CD4-positive, alpha-beta memory T cell (primary cell): ENCODE measurements at regions of chr10 and their contacts with region 1.

Region 1: DNA sequence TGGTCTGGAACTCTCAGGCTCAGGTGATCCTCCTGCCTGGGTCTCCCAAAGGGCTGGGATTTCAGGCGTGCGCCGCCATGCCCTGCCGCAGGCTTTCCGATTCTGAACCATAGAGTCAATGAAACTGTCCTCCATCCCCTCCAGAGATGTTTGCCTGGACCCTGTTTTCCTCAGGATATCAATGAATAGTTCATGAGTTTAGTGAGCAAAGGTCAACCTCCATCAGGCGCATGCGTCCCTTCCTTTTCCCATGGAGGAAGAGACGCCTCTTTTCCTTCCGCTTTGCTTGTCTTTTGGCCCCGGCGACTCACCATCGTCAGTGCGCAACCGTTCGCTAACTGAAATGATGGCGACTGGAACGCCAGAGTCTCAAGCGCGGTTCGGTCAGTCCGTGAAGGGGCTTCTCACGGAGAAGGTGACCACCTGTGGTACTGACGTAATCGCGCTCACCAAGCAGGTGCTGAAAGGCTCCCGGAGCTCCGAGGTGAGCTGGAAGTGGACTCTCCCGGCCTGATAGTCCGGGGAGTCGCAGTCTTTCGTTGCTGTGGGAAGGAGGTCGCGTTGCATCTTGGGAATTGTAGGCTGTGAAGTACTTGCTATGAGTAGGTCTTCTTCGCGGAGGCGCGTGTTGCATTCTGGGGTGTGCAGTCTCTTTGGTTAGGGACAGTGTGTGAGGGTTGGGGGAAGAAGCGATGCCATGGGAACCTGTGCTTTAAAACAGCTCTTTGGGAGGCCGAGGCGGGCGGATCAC is at the start of gene BORCS7:
- DNase-seq: peak; percentile 87 to 93 (median 89)
- H3K4me3 ChIP-seq: peak within 1 kb of the TSS; percentile 63 to 91
- H3K4me3 Mint-ChIP-seq: peak within 1 kb of the TSS; percentile 77 to 99 (median 94)
- H3K27ac ChIP-seq: peak within 1 kb of the TSS; percentile 89
- H3K27ac Mint-ChIP-seq: peak within 1 kb of the TSS; percentile 92 to 100 (median 99)
- H3K4me1 ChIP-seq: peaks cover 4% of the 10 kb centered on the region
- H3K4me1 Mint-ChIP-seq: peaks cover 8 to 24% (median 14%) of the 10 kb centered on the region in 4 donors
- H3K27me3 ChIP-seq: no peaks in the 10 kb centered on the region
- H3K27me3 Mint-ChIP-seq: no peaks in the 10 kb centered on the region
- total RNA-seq, gene BORCS7: 14.7 to 17.7 TPM

Region 2: GRCh38 chr10:102704915-102705314 is 149.2 kb before region 1 on chr10:
- CTCF ChIA-PET with region 1: no interaction called
- POLR2A ChIA-PET with region 1: no interaction called
- intact Hi-C with region 1: no loop called
- DNase-seq: no peak
- H3K4me3 ChIP-seq: no peak overlapping the region
- H3K4me3 Mint-ChIP-seq: no peak overlapping the region
- H3K27ac ChIP-seq: no peak overlapping the region
- H3K27ac Mint-ChIP-seq: peak overlapping the region in 1 of 7 donors; percentile 25
- H3K4me1 ChIP-seq: no peaks in the 10 kb centered on the region
- H3K4me1 Mint-ChIP-seq: peaks cover 7 to 14% (median 8%) of the 10 kb centered on the region in 4 donors
- H3K27me3 ChIP-seq: no peaks in the 10 kb centered on the region
- H3K27me3 Mint-ChIP-seq: no peaks in the 10 kb centered on the region

Region 3: DNA sequence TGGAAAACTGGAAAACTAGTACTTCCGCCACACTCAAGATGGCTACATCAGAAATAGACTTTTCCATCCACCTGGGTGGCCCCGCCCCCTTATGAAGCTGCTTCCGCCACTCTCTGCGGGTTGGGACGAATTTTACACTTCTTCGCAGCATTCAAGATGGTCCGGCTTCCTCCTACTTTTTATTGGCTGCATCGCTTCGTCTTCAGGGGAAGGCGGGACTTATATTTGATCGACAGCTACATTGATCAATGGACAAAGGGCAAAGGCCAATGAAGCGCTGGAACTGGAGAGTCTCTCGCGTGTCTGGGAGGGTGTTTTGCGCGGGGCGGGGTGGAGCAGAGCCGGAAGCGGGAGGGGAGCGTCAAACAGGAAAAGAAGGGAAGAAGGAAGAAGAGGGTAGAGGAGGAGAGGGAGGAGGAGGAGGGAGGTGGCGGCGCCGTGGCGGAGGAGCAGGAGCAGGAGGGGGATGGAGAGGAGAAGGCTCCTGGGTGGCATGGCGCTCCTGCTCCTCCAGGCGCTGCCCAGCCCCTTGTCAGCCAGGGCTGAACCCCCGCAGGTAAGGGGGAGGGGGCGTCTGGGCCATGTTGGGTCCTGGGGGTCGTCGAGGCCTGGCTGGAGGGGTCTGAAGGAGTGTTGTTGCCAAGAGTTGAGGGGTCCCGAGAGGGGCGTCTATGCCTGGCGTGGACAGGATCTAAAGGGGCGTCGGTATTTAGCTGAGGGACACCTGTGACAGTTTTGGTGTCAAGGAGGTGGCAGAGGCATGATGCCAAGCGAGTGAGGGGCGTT is 110.3 kb before region 1 on chr10 and contains the start of gene WBP1L:
- CTCF ChIA-PET with region 1: no interaction called
- POLR2A ChIA-PET with region 1: no interaction called
- intact Hi-C with region 1: loop called (anchors 2 kb)
- DNase-seq: peak; percentile 95 to 98 (median 97)
- H3K4me3 ChIP-seq: peak within 1 kb of the TSS; percentile 79 to 96
- H3K4me3 Mint-ChIP-seq: peak within 1 kb of the TSS; percentile 90 to 99 (median 96)
- H3K27ac ChIP-seq: peak within 1 kb of the TSS; percentile 81
- H3K27ac Mint-ChIP-seq: peak within 1 kb of the TSS; percentile 69 to 99 (median 94)
- H3K4me1 ChIP-seq: peaks cover 35% of the 10 kb centered on the region
- H3K4me1 Mint-ChIP-seq: peaks cover 33 to 50% (median 42%) of the 10 kb centered on the region in 4 donors
- H3K27me3 ChIP-seq: no peaks in the 10 kb centered on the region
- H3K27me3 Mint-ChIP-seq: no peaks in the 10 kb centered on the region
- total RNA-seq, gene WBP1L: 39.3 to 41.1 TPM

Region 4: GRCh38 chr10:102837230-102837721 is 16.8 kb before region 1 on chr10 and contains the start of gene CYP17A1:
- CTCF ChIA-PET with region 1: no interaction called
- POLR2A ChIA-PET with region 1: no interaction called
- intact Hi-C with region 1: no loop called
- DNase-seq: no peak
- H3K4me3 ChIP-seq: no peak within 1 kb of the TSS
- H3K4me3 Mint-ChIP-seq: no peak within 1 kb of the TSS
- H3K27ac ChIP-seq: no peak within 1 kb of the TSS
- H3K27ac Mint-ChIP-seq: no peak within 1 kb of the TSS
- H3K4me1 ChIP-seq: no peaks in the 10 kb centered on the region
- H3K4me1 Mint-ChIP-seq: peaks cover 0 to 1% (median 0%) of the 10 kb centered on the region in 4 donors
- H3K27me3 ChIP-seq: no peaks in the 10 kb centered on the region
- H3K27me3 Mint-ChIP-seq: peaks cover 9 to 15% of the 10 kb centered on the region in 2 donors
- total RNA-seq, gene CYP17A1: not detected

Region 5: GRCh38 chr10:102904346-102904745 is 50.2 kb after region 1 on chr10:
- CTCF ChIA-PET with region 1: no interaction called
- POLR2A ChIA-PET with region 1: no interaction called
- intact Hi-C with region 1: no loop called
- DNase-seq: no peak
- H3K4me3 ChIP-seq: no peak overlapping the region
- H3K4me3 Mint-ChIP-seq: no peak overlapping the region
- H3K27ac ChIP-seq: no peak overlapping the region
- H3K27ac Mint-ChIP-seq: no peak overlapping the region
- H3K4me1 ChIP-seq: no peaks in the 10 kb centered on the region
- H3K4me1 Mint-ChIP-seq: no peaks in the 10 kb centered on the region
- H3K27me3 ChIP-seq: no peaks in the 10 kb centered on the region
- H3K27me3 Mint-ChIP-seq: no peaks in the 10 kb centered on the region

Region 6: DNA sequence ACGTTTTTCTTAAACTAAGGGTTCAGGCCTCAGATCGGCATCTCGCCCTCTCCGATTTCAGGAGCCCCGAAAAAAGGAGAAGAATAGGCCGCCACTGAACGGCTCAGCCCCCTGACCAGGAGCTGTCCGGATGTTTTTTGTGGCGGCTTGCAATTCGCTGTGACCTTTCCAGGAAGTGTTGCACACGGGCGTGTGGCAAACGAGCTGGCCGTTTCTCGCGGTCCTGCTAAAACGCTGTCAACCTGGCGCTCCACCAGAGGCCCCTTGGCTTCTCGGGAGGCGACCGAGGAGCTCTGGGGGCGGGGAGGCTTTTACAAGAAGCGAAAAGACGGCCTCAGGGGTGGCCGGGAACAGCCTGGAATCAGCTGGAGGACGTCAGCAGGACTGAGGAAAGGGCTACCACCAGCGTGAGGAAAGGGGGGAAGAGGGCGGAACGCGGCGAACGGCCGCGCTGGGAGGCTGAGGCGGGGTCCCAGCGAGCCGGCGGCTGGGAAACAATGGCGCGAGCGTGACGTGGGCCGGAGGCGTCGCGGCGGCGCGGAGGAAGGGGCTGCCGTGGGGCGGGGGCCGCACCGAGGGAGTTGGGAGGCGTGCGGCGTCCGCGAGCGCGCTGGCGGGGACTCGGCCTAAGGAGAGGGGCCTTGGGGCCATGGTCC is 338.5 kb after region 1 on chr10:
- CTCF ChIA-PET with region 1: no interaction called
- POLR2A ChIA-PET with region 1: no interaction called
- intact Hi-C with region 1: loop called (anchors 1 kb)
- DNase-seq: peak; percentile 48 to 68 (median 56)
- H3K4me3 ChIP-seq: peak overlapping the region; percentile 80 to 81
- H3K4me3 Mint-ChIP-seq: peak overlapping the region; percentile 94 to 99 (median 98)
- H3K27ac ChIP-seq: peak overlapping the region; percentile 76
- H3K27ac Mint-ChIP-seq: peak overlapping the region; percentile 94 to 98 (median 97)
- H3K4me1 ChIP-seq: peaks cover 45% of the 10 kb centered on the region
- H3K4me1 Mint-ChIP-seq: peaks cover 29 to 56% (median 41%) of the 10 kb centered on the region in 4 donors
- H3K27me3 ChIP-seq: no peaks in the 10 kb centered on the region
- H3K27me3 Mint-ChIP-seq: no peaks in the 10 kb centered on the region